ENCODE measurements at regions of chr1 and their contacts with region 1.

Region 1: DNA sequence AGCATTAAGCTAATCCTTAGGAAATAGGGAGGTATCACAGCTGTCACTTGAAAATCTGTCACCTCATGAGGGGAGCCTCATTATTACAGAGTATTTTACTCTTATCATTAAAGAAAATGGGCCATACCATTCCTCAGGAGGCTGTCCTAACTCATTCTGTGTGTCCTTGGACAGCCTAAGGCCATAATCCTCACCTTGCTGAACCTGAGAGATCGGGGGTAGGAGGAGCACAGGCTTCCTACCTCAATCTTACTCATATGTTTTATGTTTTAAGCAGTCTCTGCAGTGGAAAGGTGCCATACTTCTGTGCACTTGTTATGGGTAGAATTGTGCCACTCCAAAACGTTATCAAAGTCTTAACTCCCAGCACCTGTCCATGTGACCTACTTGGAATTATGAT is 622.0 kb downstream of the PTPRC start:
- DNase-seq: no peak
- H3K4me3 Mint-ChIP-seq: no peak overlapping the region
- H3K27ac Mint-ChIP-seq: no peak overlapping the region
- H3K4me1 Mint-ChIP-seq: no peaks in the 10 kb centered on the region
- H3K27me3 Mint-ChIP-seq: no peaks in the 10 kb centered on the region
- CTCF ChIP-seq: no peak

Region 2: DNA sequence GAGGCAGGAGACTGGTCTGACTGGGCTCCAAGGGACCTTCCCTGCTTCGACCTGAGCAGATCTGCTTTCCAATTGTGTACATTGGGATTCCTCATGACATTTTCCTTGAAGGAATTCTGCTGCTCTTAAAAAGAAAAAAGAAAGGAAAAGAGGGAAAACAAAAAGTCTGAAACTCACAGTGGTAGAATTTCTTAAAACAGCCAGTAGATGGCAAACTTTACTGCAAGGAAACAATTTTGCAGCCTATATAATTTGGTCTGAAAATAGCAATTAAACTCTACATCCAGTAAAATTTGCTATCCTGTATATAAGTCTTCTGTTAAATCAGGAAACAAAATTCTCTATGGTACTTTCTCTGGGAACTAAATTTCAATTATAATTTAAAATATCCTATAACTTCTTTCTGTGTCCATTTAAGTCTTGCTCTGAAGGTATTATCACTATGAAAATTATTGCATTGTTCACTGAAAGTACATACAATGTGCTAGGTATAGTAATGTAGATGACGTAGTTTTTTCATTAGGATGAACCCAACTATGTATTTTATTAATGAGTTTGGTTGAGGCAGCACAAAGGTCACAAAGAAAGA is 1932.9 kb before region 1 on chr1:
- CTCF ChIA-PET with region 1: interaction called, 13 read pairs
- intact Hi-C with region 1: no loop called
- DNase-seq: no peak
- H3K4me3 Mint-ChIP-seq: no peak overlapping the region
- H3K27ac Mint-ChIP-seq: no peak overlapping the region
- H3K4me1 Mint-ChIP-seq: no peaks in the 10 kb centered on the region
- H3K27me3 Mint-ChIP-seq: no peaks in the 10 kb centered on the region
- CTCF ChIP-seq: peak; percentile 56